Left ventricle myocardium inferior (tissue), 1 donor: ENCODE measurements at regions of chr1 and their contacts with region 1.

Region 1: GRCh38 chr1:54125386-54126070 is 27.3 kb downstream of the CDCP2 start:
- DNase-seq: peak; percentile 32
- H3K4me3 ChIP-seq: no peak overlapping the region
- H3K27ac ChIP-seq: no peak overlapping the region
- H3K4me1 ChIP-seq: peaks cover 11% of the 10 kb centered on the region
- H3K27me3 ChIP-seq: peaks cover under 1% of the 10 kb centered on the region
- CTCF ChIP-seq: peak; percentile 61

Region 2: DNA sequence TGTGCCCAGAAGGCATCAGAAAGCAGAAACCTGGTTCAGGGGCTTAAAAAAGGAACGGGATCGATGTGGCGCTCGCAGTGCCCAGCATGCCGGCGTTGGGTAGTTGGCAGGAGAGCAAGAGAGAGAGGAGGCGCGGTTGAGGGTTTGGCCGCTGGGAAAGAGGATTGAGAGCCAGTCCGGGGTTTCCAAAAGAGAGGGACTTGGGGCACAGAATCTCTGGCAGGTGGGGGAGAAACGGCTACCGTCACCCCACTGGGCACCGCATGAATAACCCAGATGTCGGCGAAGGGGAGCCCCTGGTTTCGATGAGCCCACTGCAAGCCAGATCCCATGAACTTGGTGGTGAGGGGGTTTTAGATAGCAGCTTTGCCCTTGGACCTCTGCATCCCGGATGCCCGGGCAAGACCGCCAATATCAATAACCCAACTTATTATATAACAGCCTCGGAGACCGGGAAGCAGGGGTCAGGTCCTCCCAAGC is 362.1 kb after region 1 on chr1:
- intact Hi-C with region 1: loop called (anchors 5 kb)
- DNase-seq: peak; percentile 43
- H3K4me3 ChIP-seq: peak overlapping the region; percentile 79
- H3K27ac ChIP-seq: peak overlapping the region; percentile 95
- H3K4me1 ChIP-seq: peaks cover 42% of the 10 kb centered on the region
- H3K27me3 ChIP-seq: no peaks in the 10 kb centered on the region
- CTCF ChIP-seq: no peak